H1 (cell line): ENCODE measurements at regions of chr14 and their contacts with region 1.

Region 1: GRCh38 chr14:102998393-102998792 is 59.0 kb downstream of the CDC42BPB start:
- DNase-seq: no peak
- H3K4me3 ChIP-seq: no peak overlapping the region
- H3K27ac ChIP-seq: no peak overlapping the region
- H3K4me1 ChIP-seq: no peaks in the 10 kb centered on the region
- H3K27me3 ChIP-seq: no peaks in the 10 kb centered on the region
- CTCF ChIP-seq: no peak
- EP300 ChIP-seq: no peak
- POLR2A ChIP-seq: no peak
- RAD21 ChIP-seq: no peak

Region 2: GRCh38 chr14:102973706-102974285 is 24.6 kb before region 1 on chr14:
- CTCF ChIA-PET with region 1: interaction called, 10 read pairs
- POLR2A ChIA-PET with region 1: no interaction called
- DNase-seq: no peak
- H3K4me3 ChIP-seq: no peak overlapping the region
- H3K27ac ChIP-seq: no peak overlapping the region
- H3K4me1 ChIP-seq: no peaks in the 10 kb centered on the region
- H3K27me3 ChIP-seq: no peaks in the 10 kb centered on the region
- CTCF ChIP-seq: no peak
- EP300 ChIP-seq: no peak
- POLR2A ChIP-seq: no peak
- RAD21 ChIP-seq: no peak

Region 3: GRCh38 chr14:103013028-103013427 is 14.6 kb after region 1 on chr14:
- CTCF ChIA-PET with region 1: interaction called, 10 read pairs
- POLR2A ChIA-PET with region 1: no interaction called
- DNase-seq: no peak
- H3K4me3 ChIP-seq: no peak overlapping the region
- H3K27ac ChIP-seq: no peak overlapping the region
- H3K4me1 ChIP-seq: peaks cover 0 to 4% (median 3%) of the 10 kb centered on the region in 4 experiments; a peak in 3 of 7 replicates
- H3K27me3 ChIP-seq: no peaks in the 10 kb centered on the region; a peak in 1 of 7 replicates
- CTCF ChIP-seq: no peak
- EP300 ChIP-seq: no peak
- POLR2A ChIP-seq: no peak
- RAD21 ChIP-seq: no peak